ENCODE measurements at regions of chr17 and their contacts with region 1.

Region 1: GRCh38 chr17:75173526-75173925 is 9.2 kb downstream of the SUMO2 start:
- DNase-seq: no peak
- H3K4me3 ChIP-seq: no peak overlapping the region
- H3K27ac ChIP-seq: no peak overlapping the region
- H3K4me1 ChIP-seq: no peaks in the 10 kb centered on the region
- H3K27me3 ChIP-seq: no peaks in the 10 kb centered on the region
- CTCF ChIP-seq: no peak
- POLR2A ChIP-seq: no peak

Region 2: DNA sequence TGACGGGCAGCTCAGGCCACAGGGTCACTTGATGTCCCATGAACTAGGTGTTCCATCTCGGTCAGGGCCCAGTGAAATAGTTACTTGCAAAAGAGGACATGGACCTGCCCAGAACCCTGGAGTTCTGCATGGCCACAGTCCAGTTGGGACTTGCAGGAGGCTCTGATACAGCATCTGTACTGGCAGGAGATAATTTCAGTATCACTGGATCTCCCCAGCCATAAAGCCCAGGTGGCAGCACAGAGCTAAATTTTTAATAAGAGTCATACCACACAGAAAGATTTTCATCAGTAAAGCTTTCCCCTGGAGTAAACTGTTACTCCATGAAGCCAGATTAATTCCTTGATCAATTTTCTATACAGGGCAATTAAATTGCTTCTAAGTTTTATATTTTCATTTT is 103.7 kb before region 1 on chr17:
- CTCF ChIA-PET with region 1: interaction called, 14 read pairs
- POLR2A ChIA-PET with region 1: no interaction called
- dilution Hi-C with region 1: no loop called
- intact Hi-C with region 1: no loop called
- DNase-seq: peak; percentile 45
- H3K4me3 ChIP-seq: no peak overlapping the region
- H3K27ac ChIP-seq: no peak overlapping the region
- H3K4me1 ChIP-seq: peaks cover 6% of the 10 kb centered on the region
- H3K27me3 ChIP-seq: no peaks in the 10 kb centered on the region
- CTCF ChIP-seq: peak in 1 of 2 donors; percentile 23
- POLR2A ChIP-seq: no peak

Region 3: DNA sequence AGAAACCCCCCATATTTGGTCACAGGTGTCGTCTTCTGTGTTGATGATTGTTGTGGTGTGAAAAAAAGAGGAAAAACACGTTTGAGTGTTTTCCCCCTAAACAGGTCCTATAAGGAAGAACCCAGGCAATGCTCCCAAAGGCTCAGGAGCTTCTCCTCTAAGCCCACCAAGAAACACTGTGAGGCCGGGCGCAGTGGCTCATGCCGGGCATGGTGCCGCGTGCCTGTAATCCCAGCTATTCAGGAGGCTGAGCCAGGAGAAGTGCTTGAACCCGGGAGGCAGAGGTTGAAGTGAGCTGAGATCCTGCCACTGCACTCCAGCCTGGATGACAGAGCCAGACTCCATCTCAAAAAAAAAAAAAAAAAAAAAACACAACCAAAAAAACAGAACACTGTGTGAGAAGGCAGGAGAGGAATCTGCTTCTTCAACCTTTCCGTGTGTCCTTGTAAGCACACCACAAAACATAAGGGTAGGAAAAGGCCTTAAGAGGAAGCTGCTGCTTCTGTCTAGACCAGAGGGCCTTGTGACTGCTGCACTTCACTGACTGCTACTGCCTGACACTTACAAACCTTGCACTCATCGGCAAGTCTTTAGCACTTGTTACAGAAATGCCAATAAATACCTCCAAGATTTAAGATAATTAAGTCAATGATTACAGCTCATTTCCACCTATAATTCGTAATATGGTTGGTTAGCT is 28.6 kb before region 1 on chr17:
- CTCF ChIA-PET with region 1: interaction called, 12 read pairs
- POLR2A ChIA-PET with region 1: no interaction called
- dilution Hi-C with region 1: no loop called
- intact Hi-C with region 1: no loop called
- DNase-seq: no peak
- H3K4me3 ChIP-seq: no peak overlapping the region
- H3K27ac ChIP-seq: no peak overlapping the region
- H3K4me1 ChIP-seq: no peaks in the 10 kb centered on the region
- H3K27me3 ChIP-seq: no peaks in the 10 kb centered on the region
- CTCF ChIP-seq: no peak
- POLR2A ChIP-seq: no peak

Region 4: GRCh38 chr17:75154195-75155106 is 19.1 kb before region 1 on chr17 and contains the start of gene JPT1:
- CTCF ChIA-PET with region 1: interaction called, 9 read pairs
- POLR2A ChIA-PET with region 1: interaction called, 10 read pairs
- dilution Hi-C with region 1: no loop called
- intact Hi-C with region 1: no loop called
- DNase-seq: peak; percentile 99
- H3K4me3 ChIP-seq: peak within 1 kb of the TSS; percentile 57 to 83 (median 62)
- H3K27ac ChIP-seq: peak within 1 kb of the TSS; percentile 60
- H3K4me1 ChIP-seq: peaks cover 27% of the 10 kb centered on the region
- H3K27me3 ChIP-seq: no peaks in the 10 kb centered on the region
- CTCF ChIP-seq: no peak
- POLR2A ChIP-seq: peak; percentile 100
- total RNA-seq, gene JPT1: 352 and 364 TPM in 2 replicates

Region 5: GRCh38 chr17:75219815-75220214 is 46.3 kb after region 1 on chr17:
- CTCF ChIA-PET with region 1: no interaction called
- POLR2A ChIA-PET with region 1: no interaction called
- dilution Hi-C with region 1: no loop called
- intact Hi-C with region 1: no loop called
- DNase-seq: no peak
- H3K4me3 ChIP-seq: no peak overlapping the region
- H3K27ac ChIP-seq: no peak overlapping the region
- H3K4me1 ChIP-seq: no peaks in the 10 kb centered on the region
- H3K27me3 ChIP-seq: no peaks in the 10 kb centered on the region
- CTCF ChIP-seq: no peak
- POLR2A ChIP-seq: no peak

Region 6: DNA sequence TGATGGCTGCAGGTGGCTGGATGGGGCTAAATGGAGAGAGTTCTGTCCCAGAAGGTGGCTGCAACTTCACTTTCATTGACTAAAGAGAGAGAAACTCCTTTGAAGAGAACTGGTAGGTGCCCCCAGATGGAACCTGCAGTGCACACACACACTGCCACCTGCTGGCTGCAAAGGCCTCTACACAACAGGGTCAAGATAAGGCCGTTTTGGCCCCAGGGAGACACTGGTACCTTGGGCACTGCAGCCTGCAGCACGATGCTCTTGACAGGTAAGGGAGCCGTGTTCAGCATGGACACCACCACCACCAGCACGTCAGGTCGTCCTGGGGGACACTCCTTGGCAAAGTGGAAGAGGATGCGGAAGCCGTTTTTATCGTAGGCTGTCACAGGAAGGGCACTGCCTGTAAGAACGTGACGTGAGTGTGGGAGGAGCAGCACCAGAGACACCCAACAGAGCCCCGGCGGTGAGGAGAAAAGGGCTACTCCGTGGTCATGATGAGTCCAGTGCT is 65.2 kb after region 1 on chr17:
- CTCF ChIA-PET with region 1: no interaction called
- POLR2A ChIA-PET with region 1: no interaction called
- dilution Hi-C with region 1: no loop called
- intact Hi-C with region 1: no loop called
- DNase-seq: peak; percentile 62
- H3K4me3 ChIP-seq: no peak overlapping the region
- H3K27ac ChIP-seq: no peak overlapping the region
- H3K4me1 ChIP-seq: no peaks in the 10 kb centered on the region
- H3K27me3 ChIP-seq: no peaks in the 10 kb centered on the region
- CTCF ChIP-seq: peak; percentile 86 to 92
- POLR2A ChIP-seq: no peak

Region 7: DNA sequence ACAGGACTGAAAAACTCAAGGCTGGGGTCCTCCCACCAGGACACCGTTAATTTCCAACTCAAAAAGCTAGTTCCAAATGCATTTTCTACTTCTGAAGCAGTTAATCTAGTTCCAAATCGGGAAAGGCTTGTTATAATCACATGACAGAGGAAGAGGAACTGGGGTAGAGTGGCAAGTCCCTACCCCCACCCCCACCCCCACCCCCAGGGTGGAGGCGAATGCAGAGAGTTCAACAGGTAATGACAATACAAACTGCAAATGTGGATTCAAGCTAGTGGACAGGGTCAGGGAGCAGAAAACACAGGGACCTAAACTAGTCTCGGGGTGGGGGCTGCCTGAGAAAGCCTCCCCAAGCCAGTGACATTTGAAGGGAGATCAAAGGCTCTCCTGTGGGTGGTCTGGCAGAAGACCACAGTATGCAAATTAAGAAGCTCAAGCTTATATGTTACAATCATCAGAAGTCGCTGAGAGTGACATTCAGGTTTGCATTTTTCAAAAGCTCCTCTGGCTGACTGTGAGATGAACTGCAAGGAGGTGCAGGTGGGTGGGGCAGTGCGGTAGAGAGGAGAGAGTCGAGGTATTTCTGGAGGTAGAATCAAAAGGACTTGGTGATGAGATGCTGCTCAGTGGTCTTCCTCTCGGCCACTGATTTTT is 172.1 kb after region 1 on chr17:
- CTCF ChIA-PET with region 1: no interaction called
- POLR2A ChIA-PET with region 1: no interaction called
- dilution Hi-C with region 1: no loop called
- intact Hi-C with region 1: no loop called
- DNase-seq: no peak
- H3K4me3 ChIP-seq: no peak overlapping the region
- H3K27ac ChIP-seq: no peak overlapping the region
- H3K4me1 ChIP-seq: no peaks in the 10 kb centered on the region
- H3K27me3 ChIP-seq: no peaks in the 10 kb centered on the region
- CTCF ChIP-seq: no peak
- POLR2A ChIP-seq: no peak

Region 8: GRCh38 chr17:75428543-75429469 is 255.3 kb after region 1 on chr17:
- CTCF ChIA-PET with region 1: no interaction called
- POLR2A ChIA-PET with region 1: no interaction called
- dilution Hi-C with region 1: no loop called
- intact Hi-C with region 1: no loop called
- DNase-seq: no peak
- H3K4me3 ChIP-seq: no peak overlapping the region
- H3K27ac ChIP-seq: no peak overlapping the region
- H3K4me1 ChIP-seq: peaks cover 3% of the 10 kb centered on the region
- H3K27me3 ChIP-seq: peaks cover 3 to 6% of the 10 kb centered on the region in 2 experiments
- CTCF ChIP-seq: no peak
- POLR2A ChIP-seq: no peak